Activated naive CD4-positive, alpha-beta T cell treated with anti-CD3 and anti-CD28 coated beads for 36 hours (primary cell): ENCODE measurements at regions of chr2 and their contacts with region 1.

Region 1: DNA sequence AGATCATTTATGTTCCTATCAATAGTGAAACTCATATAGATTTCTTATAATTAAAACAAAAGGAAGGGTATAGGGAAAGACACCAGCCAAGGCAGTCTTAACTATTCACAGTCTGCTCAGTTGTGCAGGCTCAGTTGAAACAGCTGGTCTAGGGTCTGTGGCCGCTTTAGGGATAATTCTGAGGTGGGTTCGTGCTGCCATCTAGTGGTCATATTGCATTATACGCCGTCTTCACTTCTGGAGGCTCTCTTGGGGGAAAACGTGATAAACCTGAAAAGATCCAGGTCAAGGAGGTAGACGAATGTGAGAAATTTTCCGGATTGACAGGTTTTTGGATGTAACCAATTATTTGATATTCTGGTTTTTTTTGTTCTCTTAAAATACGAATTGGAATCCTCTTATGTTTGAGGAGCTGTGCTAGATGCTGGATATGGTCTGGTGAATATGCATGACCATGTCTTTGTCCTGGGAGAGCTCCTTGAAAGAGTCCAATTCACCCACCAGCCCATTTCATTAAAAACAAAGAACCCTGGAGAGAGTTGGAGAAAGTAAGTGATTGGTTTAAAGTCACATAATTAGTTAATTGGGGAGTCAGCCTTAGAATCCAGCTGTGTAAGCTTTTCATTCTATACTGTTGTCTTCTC is 492.4 kb downstream of the PLCL1 start:
- DNase-seq: peak; percentile 73
- H3K4me3 Mint-ChIP-seq: no peak overlapping the region
- H3K27ac Mint-ChIP-seq: no peak overlapping the region
- H3K4me1 Mint-ChIP-seq: no peaks in the 10 kb centered on the region
- H3K27me3 Mint-ChIP-seq: peaks cover 7% of the 10 kb centered on the region

Region 2: GRCh38 chr2:198053776-198054698 is 242.8 kb before region 1 on chr2:
- CTCF ChIA-PET with region 1: no interaction called
- intact Hi-C with region 1: loop called (anchors 10 kb)
- DNase-seq: peak; percentile 71
- H3K4me3 Mint-ChIP-seq: no peak overlapping the region
- H3K27ac Mint-ChIP-seq: no peak overlapping the region
- H3K4me1 Mint-ChIP-seq: peaks cover 27% of the 10 kb centered on the region
- H3K27me3 Mint-ChIP-seq: no peaks in the 10 kb centered on the region

Region 3: GRCh38 chr2:198220763-198221610 is 75.8 kb before region 1 on chr2:
- CTCF ChIA-PET with region 1: interaction called, 10 read pairs
- intact Hi-C with region 1: no loop called
- DNase-seq: no peak
- H3K4me3 Mint-ChIP-seq: no peak overlapping the region
- H3K27ac Mint-ChIP-seq: no peak overlapping the region
- H3K4me1 Mint-ChIP-seq: no peaks in the 10 kb centered on the region
- H3K27me3 Mint-ChIP-seq: no peaks in the 10 kb centered on the region